ENCODE measurements at regions of chr1 and their contacts with region 1.

Region 1: GRCh38 chr1:8858888-8859706 is 19.4 kb downstream of the ENO1 start:
- DNase-seq: peak; percentile 83
- H3K4me3 ChIP-seq: no peak overlapping the region
- H3K27ac ChIP-seq: peak overlapping the region; percentile 80
- H3K4me1 ChIP-seq: peaks cover 36% of the 10 kb centered on the region
- H3K27me3 ChIP-seq: no peaks in the 10 kb centered on the region
- CTCF ChIP-seq: peak; percentile 65
- POLR2A ChIP-seq: peak; percentile 33

Region 2: GRCh38 chr1:8873506-8874229 is 14.6 kb after region 1 on chr1:
- CTCF ChIA-PET with region 1: interaction called, 71 read pairs
- POLR2A ChIA-PET with region 1: interaction called, 5 read pairs
- dilution Hi-C with region 1: no loop called
- intact Hi-C with region 1: loop called (anchors 1 kb)
- DNase-seq: peak; percentile 97
- H3K4me3 ChIP-seq: peak overlapping the region in 1 of 3 experiments; percentile 25
- H3K27ac ChIP-seq: peak overlapping the region; percentile 48
- H3K4me1 ChIP-seq: peaks cover 50% of the 10 kb centered on the region
- H3K27me3 ChIP-seq: no peaks in the 10 kb centered on the region
- CTCF ChIP-seq: no peak
- POLR2A ChIP-seq: peak; percentile 58

Region 3: GRCh38 chr1:8878448-8879347 is 19.6 kb after region 1 on chr1 and contains the start of gene ENO1:
- CTCF ChIA-PET with region 1: interaction called, 71 read pairs
- POLR2A ChIA-PET with region 1: interaction called, 5 read pairs
- dilution Hi-C with region 1: no loop called
- intact Hi-C with region 1: loop called (anchors 1 kb)
- DNase-seq: peak; percentile 99
- H3K4me3 ChIP-seq: peak within 1 kb of the TSS; percentile 48 to 83 (median 62)
- H3K27ac ChIP-seq: peak within 1 kb of the TSS; percentile 77
- H3K4me1 ChIP-seq: peaks cover 41% of the 10 kb centered on the region
- H3K27me3 ChIP-seq: no peaks in the 10 kb centered on the region
- CTCF ChIP-seq: no peak
- POLR2A ChIP-seq: peak; percentile 94
- total RNA-seq, gene ENO1: 1,530 and 1,593 TPM in 2 replicates

Region 4: GRCh38 chr1:9010781-9011323 is 151.8 kb after region 1 on chr1:
- CTCF ChIA-PET with region 1: interaction called, 106 read pairs
- POLR2A ChIA-PET with region 1: interaction called, 10 read pairs
- dilution Hi-C with region 1: no loop called
- intact Hi-C with region 1: loop called (anchors 5 kb)
- DNase-seq: no peak
- H3K4me3 ChIP-seq: no peak overlapping the region
- H3K27ac ChIP-seq: no peak overlapping the region
- H3K4me1 ChIP-seq: peaks cover 3% of the 10 kb centered on the region
- H3K27me3 ChIP-seq: no peaks in the 10 kb centered on the region
- CTCF ChIP-seq: no peak
- POLR2A ChIP-seq: no peak

Region 5: GRCh38 chr1:9128520-9129265 is 269.6 kb after region 1 on chr1 and contains the start of gene GPR157:
- CTCF ChIA-PET with region 1: no interaction called
- POLR2A ChIA-PET with region 1: no interaction called
- dilution Hi-C with region 1: no loop called
- intact Hi-C with region 1: no loop called
- DNase-seq: peak; percentile 70
- H3K4me3 ChIP-seq: peak within 1 kb of the TSS; percentile 34 to 49 (median 36)
- H3K27ac ChIP-seq: no peak within 1 kb of the TSS
- H3K4me1 ChIP-seq: peaks cover 8% of the 10 kb centered on the region
- H3K27me3 ChIP-seq: no peaks in the 10 kb centered on the region
- CTCF ChIP-seq: peak in 1 of 2 donors; percentile 19
- POLR2A ChIP-seq: peak; percentile 78
- total RNA-seq, gene GPR157: 5.2 and 6.5 TPM in 2 replicates

Measured in endothelial cell of umbilical vein (primary cell).